ENCODE measurements at regions of chr18 and their contacts with region 1.

Region 1: GRCh38 chr18:59402432-59403090 is 43.5 kb upstream of the LMAN1 start:
- DNase-seq: peak; percentile 73
- H3K4me3 Mint-ChIP-seq: no peak overlapping the region
- H3K27ac Mint-ChIP-seq: no peak overlapping the region
- H3K4me1 Mint-ChIP-seq: no peaks in the 10 kb centered on the region
- H3K27me3 Mint-ChIP-seq: peaks cover 9% of the 10 kb centered on the region

Region 2: GRCh38 chr18:59249205-59249774 is 153.3 kb before region 1 on chr18:
- CTCF ChIA-PET with region 1: interaction called, 12 read pairs
- POLR2A ChIA-PET with region 1: no interaction called
- DNase-seq: peak; percentile 36
- H3K4me3 Mint-ChIP-seq: no peak overlapping the region
- H3K27ac Mint-ChIP-seq: no peak overlapping the region
- H3K4me1 Mint-ChIP-seq: no peaks in the 10 kb centered on the region
- H3K27me3 Mint-ChIP-seq: peaks cover 40% of the 10 kb centered on the region

Region 3: DNA sequence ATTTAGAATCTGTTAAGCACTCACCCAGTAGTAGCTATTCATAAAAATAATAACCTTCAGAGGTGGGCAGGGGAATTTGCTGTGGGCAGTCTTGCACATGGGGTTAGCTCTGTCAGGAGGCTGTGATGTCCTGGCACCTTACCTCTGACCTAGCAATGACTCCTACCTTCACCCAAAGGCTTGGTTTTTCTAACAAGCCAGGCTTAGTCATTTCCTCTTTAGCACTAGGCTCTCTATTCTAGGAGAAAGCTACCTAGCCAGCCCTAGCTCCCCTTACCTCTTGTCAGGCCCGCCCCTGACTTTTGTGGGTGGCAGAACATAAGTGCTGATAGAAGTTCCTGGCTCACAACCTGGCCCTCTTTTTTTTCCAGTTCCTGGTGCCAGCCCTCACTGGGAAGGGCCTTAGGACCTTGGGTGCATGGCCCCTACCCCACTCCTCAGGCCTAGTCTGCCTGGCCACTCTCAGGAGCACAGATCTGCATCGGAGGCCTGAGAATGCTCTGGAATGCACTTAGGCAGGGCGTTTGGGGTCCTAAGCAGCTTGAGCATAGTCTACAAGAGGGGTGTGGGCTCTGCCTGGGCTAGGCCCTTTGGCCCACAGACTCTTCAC is 101.8 kb before region 1 on chr18:
- CTCF ChIA-PET with region 1: interaction called, 35 read pairs
- POLR2A ChIA-PET with region 1: no interaction called
- DNase-seq: no peak
- H3K4me3 Mint-ChIP-seq: no peak overlapping the region
- H3K27ac Mint-ChIP-seq: no peak overlapping the region
- H3K4me1 Mint-ChIP-seq: no peaks in the 10 kb centered on the region
- H3K27me3 Mint-ChIP-seq: peaks cover 12% of the 10 kb centered on the region

Region 4: DNA sequence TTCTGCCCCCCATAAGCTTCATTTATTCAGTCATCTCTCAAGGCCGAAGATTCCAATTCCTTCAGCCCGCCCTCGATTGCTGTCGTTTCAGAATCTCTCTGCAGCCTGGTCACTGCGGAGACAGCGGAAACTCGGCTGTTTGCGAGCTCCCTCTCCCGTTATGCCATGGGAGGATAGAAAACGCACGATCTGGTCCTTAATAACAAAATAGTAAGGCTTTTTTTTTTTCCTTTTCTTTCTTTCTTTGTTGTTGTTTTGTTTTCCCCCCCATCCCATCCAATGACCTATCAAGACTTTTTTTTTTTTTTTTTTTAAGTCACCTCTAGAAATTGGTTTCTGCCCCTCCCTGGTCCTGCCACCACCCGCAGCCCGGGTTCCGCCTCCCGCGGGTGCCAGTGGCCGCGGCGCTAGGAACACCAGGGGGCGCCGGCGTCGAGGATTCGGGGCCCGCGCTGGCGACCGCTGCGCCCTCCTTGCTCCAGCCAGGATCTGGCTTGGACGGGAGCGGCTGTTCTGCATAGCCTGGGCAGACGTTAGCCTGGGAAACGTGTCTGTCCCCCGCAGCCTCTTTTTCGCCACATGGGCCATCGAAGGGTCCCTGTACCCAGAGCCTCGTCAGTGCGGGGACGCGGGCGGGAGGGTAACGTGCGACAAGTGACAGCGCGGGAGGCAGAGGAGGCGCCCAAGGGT is 94.2 kb before region 1 on chr18:
- CTCF ChIA-PET with region 1: interaction called, 35 read pairs
- POLR2A ChIA-PET with region 1: interaction called, 3 read pairs
- DNase-seq: peak; percentile 65
- H3K4me3 Mint-ChIP-seq: peak overlapping the region; percentile 43
- H3K27ac Mint-ChIP-seq: no peak overlapping the region
- H3K4me1 Mint-ChIP-seq: peaks cover 5% of the 10 kb centered on the region
- H3K27me3 Mint-ChIP-seq: peaks cover 46% of the 10 kb centered on the region

Region 5: DNA sequence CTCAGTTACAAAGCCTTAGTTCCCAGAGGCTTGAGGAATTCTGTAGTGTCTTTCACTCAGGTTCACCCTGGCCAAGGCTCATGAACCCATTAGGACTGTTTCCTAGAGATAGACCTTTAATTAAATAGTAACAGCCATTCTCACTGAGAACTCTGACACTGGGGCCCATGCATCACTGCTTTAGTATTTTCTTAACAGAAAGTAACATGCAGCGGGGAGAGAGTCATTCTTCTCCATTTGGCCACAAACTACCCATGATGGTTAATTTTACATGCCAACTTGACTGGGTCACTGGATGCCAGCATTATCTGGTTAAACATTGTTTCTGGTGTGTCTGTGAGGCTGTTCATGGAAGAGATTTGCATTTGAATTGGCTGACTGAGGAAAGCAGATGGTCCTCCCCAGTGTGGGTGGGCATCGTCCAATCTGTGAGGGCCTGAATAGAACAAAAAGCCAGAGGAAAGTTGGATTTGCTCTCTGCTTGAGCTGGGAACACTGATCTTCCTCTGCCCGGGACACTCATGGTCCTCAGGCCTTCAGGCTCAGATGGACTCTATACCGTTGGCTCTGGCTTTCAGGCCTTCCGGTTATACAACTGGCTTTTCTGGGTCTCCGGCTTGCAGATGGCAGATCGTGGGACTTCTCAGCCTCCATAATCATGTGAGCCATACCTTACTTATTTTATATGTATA is 78.5 kb before region 1 on chr18:
- CTCF ChIA-PET with region 1: no interaction called
- POLR2A ChIA-PET with region 1: no interaction called
- DNase-seq: no peak
- H3K4me3 Mint-ChIP-seq: no peak overlapping the region
- H3K27ac Mint-ChIP-seq: no peak overlapping the region
- H3K4me1 Mint-ChIP-seq: no peaks in the 10 kb centered on the region
- H3K27me3 Mint-ChIP-seq: peaks cover 8% of the 10 kb centered on the region

Region 6: GRCh38 chr18:59555995-59556659 is 153.6 kb after region 1 on chr18:
- CTCF ChIA-PET with region 1: no interaction called
- POLR2A ChIA-PET with region 1: no interaction called
- DNase-seq: no peak
- H3K4me3 Mint-ChIP-seq: no peak overlapping the region
- H3K27ac Mint-ChIP-seq: no peak overlapping the region
- H3K4me1 Mint-ChIP-seq: no peaks in the 10 kb centered on the region
- H3K27me3 Mint-ChIP-seq: no peaks in the 10 kb centered on the region

Measured in activated CD4-positive, alpha-beta T cell treated with anti-CD3 and anti-CD28 coated beads, Interleukin-2, amount 10 ng/mL, durations not matched to agents 7 days and 5 days (primary cell).